ENCODE measurements at regions of chr22 and their contacts with region 1.

Region 1: DNA sequence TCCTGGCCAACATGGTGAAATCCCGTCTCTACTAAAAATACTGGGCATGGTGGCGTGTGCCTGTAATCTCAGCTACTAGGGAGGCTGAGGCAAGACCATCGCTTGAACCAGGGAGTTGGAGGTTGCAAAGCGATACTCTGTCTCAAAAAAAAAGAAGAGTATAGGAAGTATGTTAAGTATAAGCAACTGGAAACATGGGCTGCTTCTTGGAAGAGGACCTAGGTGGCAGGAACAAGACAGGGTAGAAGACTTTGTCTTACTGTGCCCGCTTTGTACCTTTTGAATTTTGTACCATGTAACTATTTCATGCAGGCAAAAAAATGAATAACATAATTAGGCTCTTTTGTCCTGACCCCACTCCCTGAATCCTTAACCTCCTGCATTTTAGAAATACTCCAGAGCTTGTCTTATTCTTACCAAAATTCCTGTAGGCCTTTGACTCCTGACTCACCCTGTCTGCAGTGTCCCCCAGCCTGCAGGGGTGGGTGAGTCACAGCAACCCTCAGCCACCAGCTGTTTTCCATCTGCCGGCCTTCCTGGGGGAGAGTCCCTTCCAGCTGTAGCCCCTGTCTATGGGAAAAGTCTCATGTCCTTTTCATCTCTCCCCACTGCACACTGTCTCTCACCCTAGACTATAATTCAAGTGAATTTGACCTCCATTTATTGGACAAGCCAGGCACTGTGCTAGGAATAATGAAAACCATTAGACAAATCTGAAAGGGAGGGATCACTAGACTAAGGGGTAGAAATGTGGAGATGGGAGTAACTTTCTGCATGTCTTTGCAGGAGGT is 41.8 kb downstream of the TXN2 start:
- DNase-seq: peak; percentile 95
- H3K4me3 ChIP-seq: no peak overlapping the region
- CTCF ChIP-seq: no peak

Region 2: DNA sequence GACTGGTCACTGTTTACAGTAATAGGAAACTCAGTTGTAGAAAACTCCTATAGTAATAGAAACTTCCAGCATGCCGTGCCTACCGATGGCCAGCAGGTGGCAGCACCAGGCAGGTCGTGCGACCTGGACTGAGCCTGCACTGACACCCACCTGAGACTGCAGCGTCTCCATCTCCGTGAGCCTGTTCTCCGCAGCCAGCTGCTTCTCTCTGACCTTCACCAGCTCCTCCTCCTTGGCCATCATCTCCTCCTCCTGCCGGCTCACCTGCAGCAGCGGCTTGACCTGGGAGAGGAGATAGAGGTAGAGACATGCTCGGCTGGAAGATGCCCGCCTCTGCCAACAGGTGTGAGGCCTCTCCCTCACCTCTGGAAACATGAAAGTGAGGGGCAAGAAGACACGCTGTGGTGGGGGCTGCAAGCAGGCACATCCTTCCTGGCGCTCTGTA is 138.3 kb before region 1 on chr22:
- in situ Hi-C with region 1: no loop called
- DNase-seq: peak; percentile 72
- H3K4me3 ChIP-seq: no peak overlapping the region
- CTCF ChIP-seq: peak; percentile 89

Region 3: GRCh38 chr22:36339171-36340065 is 100.3 kb before region 1 on chr22:
- in situ Hi-C with region 1: loop called (anchors 10 kb)
- DNase-seq: peak; percentile 80
- H3K4me3 ChIP-seq: no peak overlapping the region
- CTCF ChIP-seq: no peak

Measured in astrocyte of the spinal cord (primary cell).